Activated CD4-positive, alpha-beta memory T cell treated with anti-CD3 and anti-CD28 coated beads for 36 hours (primary cell): ENCODE measurements at regions of chr1 and their contacts with region 1.

Region 1: DNA sequence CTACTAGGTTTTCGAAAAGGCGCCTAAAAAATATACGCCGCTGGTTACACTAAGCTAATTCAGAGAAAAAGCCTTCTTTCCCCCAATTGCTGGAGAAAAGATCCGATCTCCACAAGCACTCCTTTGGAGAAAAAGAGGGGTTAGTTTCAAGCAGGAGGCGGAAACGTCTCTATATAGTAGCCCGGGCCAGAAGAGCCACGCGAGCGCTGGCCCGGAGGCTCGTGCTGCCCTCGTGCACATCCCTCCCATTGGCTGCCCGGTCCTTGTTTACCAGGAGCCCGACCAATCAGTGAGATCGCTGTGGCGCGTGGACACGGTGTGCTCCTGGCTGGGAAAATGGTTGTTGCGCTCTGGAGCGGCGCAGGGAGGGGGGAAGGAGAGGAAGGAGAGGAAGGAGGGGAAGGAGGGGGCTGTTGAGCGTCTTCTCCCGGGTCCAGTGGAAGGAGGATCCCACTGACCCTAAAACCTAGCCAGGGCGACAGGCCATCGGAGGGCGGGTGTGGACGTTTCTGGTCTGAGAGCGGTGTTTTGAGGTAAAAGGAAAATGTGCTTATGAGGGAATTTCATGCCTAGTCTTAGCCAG is at the start of gene TXNIP:
- DNase-seq: peak; percentile 97
- H3K4me3 Mint-ChIP-seq: peak within 1 kb of the TSS; percentile 88
- H3K27ac Mint-ChIP-seq: peak within 1 kb of the TSS; percentile 92
- H3K4me1 Mint-ChIP-seq: peaks cover 63% of the 10 kb centered on the region
- H3K27me3 Mint-ChIP-seq: no peaks in the 10 kb centered on the region
- total RNA-seq, gene TXNIP: 82.6 to 88.8 TPM

Region 2: DNA sequence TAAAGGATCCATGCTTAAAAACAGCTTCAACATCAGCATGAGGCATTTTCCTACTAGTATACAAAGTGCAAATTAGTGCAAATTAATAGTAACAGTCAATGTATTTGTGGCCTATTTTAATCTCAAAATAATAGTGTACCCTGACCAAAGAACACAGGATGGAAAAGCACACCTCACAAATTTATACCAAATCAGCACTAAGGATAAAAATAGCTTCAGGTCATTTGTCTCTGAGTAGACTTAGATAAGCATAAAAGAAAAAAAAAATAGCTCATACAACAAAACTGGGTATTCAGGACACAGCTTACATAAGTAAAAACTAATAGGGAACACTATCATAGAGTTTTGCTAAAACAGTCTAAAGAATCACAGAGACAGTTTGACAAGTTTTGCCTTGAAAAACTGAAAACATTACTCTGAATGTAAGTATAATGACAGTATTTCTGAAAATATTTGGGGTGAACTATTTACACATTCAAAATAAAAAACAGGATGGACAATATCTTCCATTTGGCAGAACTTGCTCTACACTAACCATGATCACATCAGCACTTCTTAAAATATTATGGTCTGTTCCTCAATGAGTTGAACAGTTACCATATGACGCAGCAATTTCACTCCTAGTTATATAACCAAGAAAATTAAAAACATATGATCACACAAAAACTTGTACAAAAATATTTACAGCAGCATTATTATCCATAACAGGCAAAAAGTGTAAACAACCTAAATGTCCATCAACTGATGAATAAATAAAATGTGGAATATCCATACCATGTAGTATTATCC is 219.0 kb before region 1 on chr1:
- CTCF ChIA-PET with region 1: no interaction called
- POLR2A ChIA-PET with region 1: no interaction called
- intact Hi-C with region 1: no loop called
- DNase-seq: no peak
- H3K4me3 Mint-ChIP-seq: no peak overlapping the region
- H3K27ac Mint-ChIP-seq: no peak overlapping the region
- H3K4me1 Mint-ChIP-seq: peaks cover 7% of the 10 kb centered on the region
- H3K27me3 Mint-ChIP-seq: no peaks in the 10 kb centered on the region

Region 3: GRCh38 chr1:145804235-145805045 is 192.1 kb before region 1 on chr1:
- CTCF ChIA-PET with region 1: no interaction called
- POLR2A ChIA-PET with region 1: no interaction called
- intact Hi-C with region 1: no loop called
- DNase-seq: no peak
- H3K4me3 Mint-ChIP-seq: no peak overlapping the region
- H3K27ac Mint-ChIP-seq: no peak overlapping the region
- H3K4me1 Mint-ChIP-seq: peaks cover 31% of the 10 kb centered on the region
- H3K27me3 Mint-ChIP-seq: no peaks in the 10 kb centered on the region

Region 4: DNA sequence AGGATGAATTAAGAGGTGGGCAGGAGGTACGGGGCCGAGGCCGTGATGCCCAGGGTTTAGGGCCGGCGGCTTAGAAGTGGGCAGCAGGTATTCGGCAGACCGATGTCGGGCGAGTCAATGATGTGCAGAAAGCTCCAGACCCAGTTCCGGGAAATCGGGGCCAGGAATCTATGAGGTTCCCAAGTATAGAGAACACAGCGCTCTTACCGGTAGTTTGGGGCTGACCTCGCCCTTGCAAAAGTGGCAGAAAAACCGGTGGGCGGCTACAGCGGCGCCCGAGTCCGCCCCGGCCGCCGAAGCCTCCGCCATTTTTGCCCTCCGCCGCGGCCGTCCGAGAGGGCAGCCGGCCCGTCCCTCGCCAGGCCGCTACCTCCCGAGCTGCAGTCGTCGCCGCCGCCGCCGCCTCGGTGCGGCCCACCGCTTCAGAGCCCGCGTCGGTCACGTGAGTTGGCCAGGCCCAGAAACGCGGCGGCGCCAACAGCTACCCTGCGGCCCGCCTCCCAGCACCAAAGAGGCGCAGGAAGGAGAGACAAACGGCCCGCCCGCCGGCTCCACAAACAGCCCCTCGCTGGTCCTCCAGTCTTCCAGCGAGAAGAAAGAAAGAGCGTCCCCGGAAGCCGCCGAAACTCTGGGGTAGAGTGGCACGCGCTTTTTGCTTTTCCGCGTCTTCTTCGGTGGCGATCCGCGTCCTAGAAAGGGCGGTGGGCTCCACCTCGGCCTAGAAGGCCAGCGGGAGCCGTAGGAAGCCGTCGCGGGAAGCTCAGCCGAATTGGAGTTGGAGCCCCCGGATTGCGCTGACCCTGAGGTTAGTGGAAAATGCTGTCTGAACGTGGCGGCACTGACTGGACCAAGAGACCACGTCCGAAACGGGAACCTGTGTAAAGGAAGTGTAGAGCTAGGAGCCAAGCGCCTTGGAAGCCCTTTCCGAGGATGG is 172.7 kb before region 1 on chr1 and contains the starts of genes POLR3C and RNF115:
- CTCF ChIA-PET with region 1: interaction called, 3 read pairs
- POLR2A ChIA-PET with region 1: no interaction called
- intact Hi-C with region 1: loop called (anchors 5 kb)
- DNase-seq: peak; percentile 89
- H3K4me3 Mint-ChIP-seq: peak within 1 kb of the TSS; percentile 96
- H3K27ac Mint-ChIP-seq: peak within 1 kb of the TSS; percentile 95
- H3K4me1 Mint-ChIP-seq: peaks cover 47% of the 10 kb centered on the region
- H3K27me3 Mint-ChIP-seq: no peaks in the 10 kb centered on the region
- total RNA-seq, gene POLR3C: 27.3 to 28.9 TPM
- total RNA-seq, gene RNF115: 10.1 TPM

Region 5: DNA sequence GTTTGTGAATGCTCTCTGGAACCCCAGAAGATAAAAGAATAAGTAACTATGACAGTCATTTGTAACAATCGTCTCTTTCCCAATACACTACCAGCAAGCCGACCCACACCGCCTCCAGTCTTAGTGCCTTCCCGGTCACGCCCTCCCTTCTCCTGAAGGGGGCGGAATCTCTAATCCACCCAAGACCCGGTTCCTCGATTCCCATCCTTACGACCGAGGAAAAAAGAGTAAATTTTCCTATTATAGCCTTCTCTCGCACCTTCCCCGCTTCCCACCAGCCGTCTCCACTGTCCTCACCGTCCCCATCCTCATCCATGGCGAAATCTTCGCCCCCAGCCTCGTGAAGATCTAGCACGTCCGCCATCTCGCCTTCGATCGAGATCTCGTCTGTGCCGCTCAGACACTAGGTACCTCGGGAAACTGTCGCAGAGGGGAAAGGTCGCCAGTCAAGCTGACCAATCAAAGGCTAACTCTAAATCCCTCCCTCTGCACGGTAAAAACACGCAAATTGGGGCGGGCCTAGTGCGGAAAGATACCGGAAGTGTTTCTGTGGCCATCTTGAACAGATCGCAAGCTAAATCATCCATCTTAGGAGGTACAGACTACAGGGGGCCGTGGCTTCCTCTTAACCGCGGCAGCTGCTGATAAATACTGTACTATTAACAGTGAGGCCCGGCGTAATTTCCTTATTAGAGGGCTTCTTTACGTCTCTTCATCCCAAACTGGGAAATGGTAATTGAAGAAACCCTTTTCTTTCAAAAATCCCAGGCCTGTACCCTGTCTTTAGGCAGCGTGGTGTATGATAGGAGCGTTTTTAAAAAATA is 69.2 kb before region 1 on chr1 and contains the start of gene RBM8A:
- CTCF ChIA-PET with region 1: interaction called, 3 read pairs
- POLR2A ChIA-PET with region 1: interaction called, 14 read pairs
- intact Hi-C with region 1: no loop called
- DNase-seq: peak; percentile 97
- H3K4me3 Mint-ChIP-seq: no peak within 1 kb of the TSS
- H3K27ac Mint-ChIP-seq: no peak within 1 kb of the TSS
- H3K4me1 Mint-ChIP-seq: peaks cover 25% of the 10 kb centered on the region
- H3K27me3 Mint-ChIP-seq: no peaks in the 10 kb centered on the region
- total RNA-seq, gene RBM8A: 275 to 277 TPM

Region 6: GRCh38 chr1:145963995-145964901 is 32.3 kb before region 1 on chr1 and contains the starts of genes ANKRD34A and POLR3GL:
- CTCF ChIA-PET with region 1: interaction called, 11 read pairs
- POLR2A ChIA-PET with region 1: interaction called, 16 read pairs
- intact Hi-C with region 1: loop called (anchors 1 kb)
- DNase-seq: peak; percentile 96
- H3K4me3 Mint-ChIP-seq: peak within 1 kb of the TSS; percentile 98
- H3K27ac Mint-ChIP-seq: peak within 1 kb of the TSS; percentile 95
- H3K4me1 Mint-ChIP-seq: peaks cover 31% of the 10 kb centered on the region
- H3K27me3 Mint-ChIP-seq: no peaks in the 10 kb centered on the region
- total RNA-seq, gene ANKRD34A: 4.6 to 4.7 TPM
- total RNA-seq, gene POLR3GL: 27.3 to 30.9 TPM

Region 7: DNA sequence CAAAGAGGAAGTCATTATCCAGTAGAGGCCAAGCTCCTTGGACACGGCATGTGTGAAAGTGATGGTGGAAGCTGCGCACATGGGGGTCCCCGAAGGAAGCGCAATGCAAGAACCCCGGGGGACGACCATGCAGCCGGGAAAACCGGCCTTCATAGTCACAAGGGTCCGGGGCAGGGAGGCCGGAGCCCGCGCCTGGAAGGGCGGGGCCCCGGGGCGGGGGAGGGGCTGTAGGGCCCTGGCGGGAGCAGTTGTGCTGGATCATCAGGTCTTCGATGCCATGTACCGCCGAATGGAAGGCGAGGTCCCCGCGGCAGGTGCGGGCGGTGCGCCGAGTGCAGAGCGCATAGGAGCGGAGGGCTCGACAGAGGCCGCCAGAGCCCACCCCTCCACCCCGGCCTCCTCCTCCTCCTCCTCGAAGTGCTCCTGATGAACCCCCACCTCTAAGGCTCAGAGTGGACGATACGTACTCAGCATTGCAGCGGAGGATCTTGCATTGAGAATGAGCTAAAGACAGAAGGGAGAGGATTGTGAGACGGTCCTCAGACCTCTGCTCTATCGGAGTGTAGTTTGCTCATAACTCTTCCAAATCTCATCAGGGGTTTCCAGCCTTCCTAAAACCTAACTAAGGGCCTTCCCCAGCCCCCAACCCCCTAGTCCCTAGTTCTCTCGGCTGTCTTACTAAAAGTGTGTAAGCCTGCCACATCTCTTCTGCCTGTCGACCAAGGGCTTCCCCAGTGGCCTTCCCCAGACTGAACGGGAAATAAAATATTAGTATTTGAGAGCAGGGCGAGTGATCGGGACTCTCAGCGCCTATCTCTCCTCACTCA is 22.9 kb after region 1 on chr1:
- CTCF ChIA-PET with region 1: no interaction called
- POLR2A ChIA-PET with region 1: no interaction called
- intact Hi-C with region 1: no loop called
- DNase-seq: no peak
- H3K4me3 Mint-ChIP-seq: peak overlapping the region; percentile 6
- H3K27ac Mint-ChIP-seq: no peak overlapping the region
- H3K4me1 Mint-ChIP-seq: peaks cover 8% of the 10 kb centered on the region
- H3K27me3 Mint-ChIP-seq: peaks cover 29% of the 10 kb centered on the region

Region 8: DNA sequence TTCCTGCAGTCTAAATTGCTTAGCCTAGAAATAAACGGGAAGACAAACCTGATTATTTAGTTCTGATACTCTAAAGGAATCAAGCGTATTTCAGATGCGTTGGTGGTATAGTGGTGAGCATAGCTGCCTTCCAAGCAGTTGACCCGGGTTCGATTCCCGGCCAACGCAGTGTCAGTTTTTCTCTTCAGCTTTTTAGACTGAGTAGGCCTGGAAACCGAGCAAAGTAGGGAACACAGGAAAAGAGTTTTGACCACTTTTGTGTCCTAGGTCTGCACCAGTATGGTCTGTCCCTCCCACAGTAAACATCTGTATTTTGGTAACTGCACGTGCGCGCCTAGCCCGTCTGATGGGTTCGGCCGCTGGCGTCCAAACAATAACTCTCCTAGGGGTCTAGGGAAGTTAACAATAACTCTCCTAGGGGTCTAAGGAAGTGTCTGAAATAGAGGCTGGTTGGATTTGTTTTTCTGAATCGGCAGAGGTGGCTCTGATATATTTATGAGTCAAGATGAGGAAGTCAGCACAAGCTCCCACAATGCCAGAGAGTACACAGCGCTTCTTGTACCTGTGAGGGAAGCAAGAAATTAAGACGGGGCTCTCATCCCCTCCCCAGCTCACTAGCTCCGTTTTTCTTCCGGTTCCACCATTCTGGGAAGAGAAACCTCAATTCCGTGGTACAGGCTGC is 40.6 kb after region 1 on chr1:
- CTCF ChIA-PET with region 1: interaction called, 3 read pairs
- POLR2A ChIA-PET with region 1: interaction called, 9 read pairs
- intact Hi-C with region 1: loop called (anchors 1 kb)
- DNase-seq: peak; percentile 87
- H3K4me3 Mint-ChIP-seq: peak overlapping the region; percentile 100
- H3K27ac Mint-ChIP-seq: peak overlapping the region; percentile 99
- H3K4me1 Mint-ChIP-seq: peaks cover 32% of the 10 kb centered on the region
- H3K27me3 Mint-ChIP-seq: peaks cover 9% of the 10 kb centered on the region